Adrenal gland (tissue), 19 donors: ENCODE measurements at regions of chr16 and their contacts with region 1.

Region 1: GRCh38 chr16:69924777-69925191 is 26.4 kb upstream of the CLEC18A start:
- DNase-seq: peak in 2 of 7 donors; percentile 23 to 66
- H3K4me3 ChIP-seq: no peak overlapping the region
- H3K27ac ChIP-seq: peak overlapping the region in 4 of 5 donors; percentile 39 to 81 (median 76)
- H3K4me1 ChIP-seq: peaks cover 11 to 24% of the 10 kb centered on the region in 2 donors
- H3K27me3 ChIP-seq: no peaks in the 10 kb centered on the region
- CTCF ChIP-seq: no peak
- POLR2A ChIP-seq: peak in 1 of 2 donors; percentile 18

Region 2: GRCh38 chr16:68776821-68777351 is 1147.9 kb before region 1 on chr16:
- intact Hi-C with region 1: no loop called
- DNase-seq: no peak
- H3K4me3 ChIP-seq: no peak overlapping the region
- H3K27ac ChIP-seq: no peak overlapping the region
- H3K4me1 ChIP-seq: no peaks in the 10 kb centered on the region
- H3K27me3 ChIP-seq: no peaks in the 10 kb centered on the region
- CTCF ChIP-seq: no peak
- POLR2A ChIP-seq: no peak

Region 3: DNA sequence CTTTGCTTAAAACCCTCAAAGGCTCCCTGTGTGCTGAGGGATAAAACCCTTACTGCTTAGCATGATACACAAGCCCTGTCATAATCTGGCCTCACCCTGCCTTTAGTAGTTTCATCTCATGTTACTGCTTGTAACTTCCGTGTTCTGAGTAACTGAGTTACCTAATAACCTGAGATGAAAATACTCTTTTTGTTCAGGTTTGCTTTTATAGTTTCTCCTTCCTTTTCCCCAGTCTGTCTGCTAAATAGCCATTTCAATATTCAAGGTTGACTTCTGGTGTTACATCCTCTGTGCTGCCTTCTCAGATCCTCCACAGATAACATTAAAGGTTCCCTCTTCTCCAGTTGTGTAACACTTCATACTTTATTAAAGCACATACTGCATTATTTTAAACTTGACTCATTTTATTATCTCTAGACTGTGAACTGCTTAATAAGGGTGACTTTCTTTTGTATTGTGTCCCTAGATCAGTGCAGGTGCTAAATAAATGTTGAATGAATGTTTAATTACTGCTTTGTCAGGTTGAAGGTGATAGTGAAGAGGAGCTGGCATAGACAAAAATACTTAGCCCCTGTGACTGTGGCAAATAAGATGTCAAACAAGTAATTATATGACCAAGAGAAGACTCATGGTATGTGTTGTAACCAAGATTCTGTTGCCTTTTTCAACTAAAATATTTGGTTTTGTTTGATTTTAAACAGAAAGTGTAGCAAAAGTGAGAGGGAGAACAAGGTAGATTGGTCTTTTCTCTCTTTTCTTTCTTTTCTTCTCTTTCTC is 311.2 kb before region 1 on chr16:
- intact Hi-C with region 1: no loop called
- DNase-seq: peak in 1 of 7 donors; percentile 12
- H3K4me3 ChIP-seq: peak overlapping the region in 1 of 4 donors; percentile 3
- H3K27ac ChIP-seq: peak overlapping the region; percentile 2 to 58 (median 55)
- H3K4me1 ChIP-seq: peaks cover 8 to 54% of the 10 kb centered on the region in 2 donors
- H3K27me3 ChIP-seq: no peaks in the 10 kb centered on the region
- CTCF ChIP-seq: no peak
- POLR2A ChIP-seq: no peak

Region 4: GRCh38 chr16:69796351-69797118 is 128.2 kb before region 1 on chr16:
- intact Hi-C with region 1: loop called in 1 of 2 experiments (anchors 5 kb)
- DNase-seq: peak in 6 of 7 donors; percentile 40 to 71 (median 56)
- H3K4me3 ChIP-seq: peak overlapping the region in 1 of 4 donors; percentile 13
- H3K27ac ChIP-seq: no peak overlapping the region
- H3K4me1 ChIP-seq: peaks cover 4 to 8% of the 10 kb centered on the region in 2 donors
- H3K27me3 ChIP-seq: no peaks in the 10 kb centered on the region
- CTCF ChIP-seq: peak; percentile 89 to 95 (median 94)
- POLR2A ChIP-seq: no peak

Region 5: DNA sequence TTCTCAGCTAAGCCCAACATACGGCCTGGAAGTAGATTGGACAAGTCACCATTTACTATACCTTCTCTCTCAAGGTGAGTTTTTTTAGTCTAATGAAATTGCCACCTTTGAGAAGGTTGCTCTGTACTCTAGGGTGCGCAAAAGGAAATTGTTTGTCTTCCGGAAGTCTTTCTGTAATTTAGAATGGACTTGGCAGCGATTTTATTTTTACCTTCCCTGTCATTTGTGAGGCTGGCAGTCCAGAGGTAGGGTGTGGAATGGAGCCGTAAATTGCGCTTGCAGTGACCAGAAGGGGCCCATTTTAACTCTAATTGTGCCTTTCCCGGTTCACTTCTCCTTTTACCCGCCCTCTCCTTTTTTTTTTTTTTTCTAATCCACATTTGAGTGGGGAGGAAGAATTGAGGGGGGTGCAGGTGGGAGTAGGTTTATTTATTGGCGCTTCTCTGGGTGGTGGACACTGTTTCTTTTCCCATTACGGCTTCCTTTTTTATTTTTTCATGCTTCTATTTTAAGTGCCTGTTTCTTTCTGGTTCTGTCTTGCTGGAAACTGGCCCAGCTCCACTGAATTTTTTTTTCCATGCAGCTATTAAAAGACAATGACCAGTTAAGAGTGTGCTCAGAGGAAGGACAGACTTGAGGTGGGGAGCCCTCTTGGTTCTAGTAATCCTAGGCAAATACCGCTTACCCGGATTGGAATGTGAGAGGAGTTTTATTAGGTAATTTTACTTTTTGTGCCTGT is 63.3 kb before region 1 on chr16:
- intact Hi-C with region 1: loop called in 1 of 2 experiments (anchors 10 kb)
- DNase-seq: peak; percentile 70 to 89 (median 80)
- H3K4me3 ChIP-seq: no peak overlapping the region
- H3K27ac ChIP-seq: peak overlapping the region in 4 of 5 donors; percentile 74 to 93 (median 84)
- H3K4me1 ChIP-seq: peaks cover 28 to 45% of the 10 kb centered on the region in 2 donors
- H3K27me3 ChIP-seq: no peaks in the 10 kb centered on the region
- CTCF ChIP-seq: no peak
- POLR2A ChIP-seq: peak in 1 of 2 donors; percentile 67